GM12878 (cell line): ENCODE measurements at regions of chr17 and their contacts with region 1.

Region 1: DNA sequence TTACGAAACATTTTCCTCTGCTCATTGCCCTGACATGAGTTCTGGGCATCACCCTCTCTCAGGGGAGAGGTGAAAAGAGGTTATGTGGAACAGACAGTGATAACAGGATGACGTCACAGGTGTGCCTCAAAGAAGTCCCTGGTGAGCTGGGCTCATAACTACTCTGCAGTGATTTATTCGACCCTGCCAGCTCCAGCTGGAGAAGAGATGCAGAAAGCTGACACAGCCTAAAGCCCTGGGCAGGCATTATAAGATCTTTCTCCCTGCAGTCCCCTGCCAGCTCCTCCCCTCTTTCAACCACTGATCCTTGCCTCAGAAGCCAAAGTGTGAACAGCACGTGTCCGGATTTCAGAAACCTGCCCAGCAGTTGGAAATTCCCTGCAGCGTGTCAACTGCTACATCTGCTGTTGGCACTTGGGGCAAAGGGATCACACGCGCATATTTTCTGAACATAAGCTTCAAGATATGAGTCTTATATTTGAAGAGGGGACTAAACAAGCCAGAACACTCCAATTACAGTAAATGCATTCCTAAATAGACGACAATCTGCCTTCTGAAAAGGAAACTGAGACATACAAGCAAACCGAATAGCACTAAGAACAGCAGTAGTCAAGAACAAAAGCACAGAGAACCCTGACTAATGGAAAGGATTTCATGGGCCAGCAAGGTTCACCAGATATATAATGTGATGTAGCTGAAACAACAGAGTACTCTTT is 80.5 kb downstream of the SMG6 start:
- DNase-seq: peak; percentile 81
- ATAC-seq: peak; percentile 95
- H3K4me3 ChIP-seq: peak overlapping the region; percentile 29; the same call in 1 of the 2 replicates
- H3K27ac ChIP-seq: peak overlapping the region; percentile 87
- H3K4me1 ChIP-seq: peaks cover 30% of the 10 kb centered on the region
- H3K27me3 ChIP-seq: no peaks in the 10 kb centered on the region
- CTCF ChIP-seq: no peak
- EP300 ChIP-seq: peak; percentile 69 to 88
- POLR2A ChIP-seq: peak; percentile 13; the same call in 1 of the 2 replicates
- RAD21 ChIP-seq: 0 out of 2 replicates have a peak, but pooled peaks have one; percentile 8

Region 2: GRCh38 chr17:2087597-2088211 is 135.4 kb before region 1 on chr17:
- CTCF ChIA-PET with region 1: interaction called, 11 read pairs
- POLR2A ChIA-PET with region 1: interaction called, 12 read pairs
- RAD21 ChIA-PET with region 1: interaction called, 27 read pairs
- SMC1A ChIA-PET with region 1: interaction called, 44 read pairs
- in situ Hi-C with region 1: no loop called
- intact Hi-C with region 1: no loop called
- DNase-seq: peak; percentile 79
- ATAC-seq: peak; percentile 56
- H3K4me3 ChIP-seq: no peak overlapping the region
- H3K27ac ChIP-seq: peak overlapping the region; percentile 93
- H3K4me1 ChIP-seq: peaks cover 83% of the 10 kb centered on the region
- H3K27me3 ChIP-seq: no peaks in the 10 kb centered on the region
- CTCF ChIP-seq: no peak
- EP300 ChIP-seq: peak; percentile 99
- POLR2A ChIP-seq: no peak; the same call in 1 of the 2 replicates
- RAD21 ChIP-seq: no peak

Region 3: DNA sequence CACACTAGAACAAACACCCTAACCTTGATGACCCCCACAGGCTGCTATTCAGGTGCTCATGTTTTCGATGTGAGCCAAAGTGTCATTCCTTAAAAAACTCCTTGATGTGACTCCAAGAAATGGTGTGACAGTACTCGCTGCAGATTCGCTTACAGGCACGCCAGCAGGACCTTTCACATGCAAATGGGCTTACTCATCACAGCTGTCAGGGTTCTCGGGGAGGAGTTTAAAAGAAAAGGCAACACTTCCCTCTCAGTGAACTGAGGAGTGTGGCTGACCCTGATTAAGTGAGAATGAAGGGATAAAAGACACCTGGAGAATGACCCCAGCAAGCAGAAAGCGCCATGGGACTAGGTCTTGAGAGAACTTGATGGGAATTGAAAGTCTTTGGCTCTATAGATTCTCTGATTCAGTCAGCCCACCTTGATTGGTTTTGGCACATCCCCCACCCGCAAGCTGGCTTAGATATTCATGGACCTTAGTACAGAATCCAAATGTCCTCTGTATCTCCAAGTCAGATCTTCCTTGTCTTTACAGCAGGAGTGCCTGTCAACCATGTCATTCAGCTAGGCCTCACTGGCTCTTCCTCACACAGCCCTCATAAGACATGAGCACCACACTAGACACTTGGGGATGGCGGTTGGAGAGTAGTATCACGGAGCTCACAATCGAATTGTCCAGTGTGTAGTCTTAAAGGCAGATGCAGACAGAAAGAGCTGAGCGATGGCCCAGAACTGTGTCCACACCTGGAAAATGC is 85.5 kb before region 1 on chr17:
- CTCF ChIA-PET with region 1: interaction called, 4 read pairs
- POLR2A ChIA-PET with region 1: interaction called, 3 read pairs
- RAD21 ChIA-PET with region 1: interaction called, 15 read pairs
- SMC1A ChIA-PET with region 1: interaction called, 15 read pairs
- in situ Hi-C with region 1: no loop called
- intact Hi-C with region 1: no loop called
- DNase-seq: peak; percentile 51
- ATAC-seq: peak; percentile 86
- H3K4me3 ChIP-seq: no peak overlapping the region; the same call in 1 of the 2 replicates
- H3K27ac ChIP-seq: peak overlapping the region; percentile 87
- H3K4me1 ChIP-seq: peaks cover 41% of the 10 kb centered on the region
- H3K27me3 ChIP-seq: no peaks in the 10 kb centered on the region
- CTCF ChIP-seq: no peak
- EP300 ChIP-seq: no peak
- POLR2A ChIP-seq: peak; percentile 23; the same call in 1 of the 2 replicates
- RAD21 ChIP-seq: no peak

Region 4: DNA sequence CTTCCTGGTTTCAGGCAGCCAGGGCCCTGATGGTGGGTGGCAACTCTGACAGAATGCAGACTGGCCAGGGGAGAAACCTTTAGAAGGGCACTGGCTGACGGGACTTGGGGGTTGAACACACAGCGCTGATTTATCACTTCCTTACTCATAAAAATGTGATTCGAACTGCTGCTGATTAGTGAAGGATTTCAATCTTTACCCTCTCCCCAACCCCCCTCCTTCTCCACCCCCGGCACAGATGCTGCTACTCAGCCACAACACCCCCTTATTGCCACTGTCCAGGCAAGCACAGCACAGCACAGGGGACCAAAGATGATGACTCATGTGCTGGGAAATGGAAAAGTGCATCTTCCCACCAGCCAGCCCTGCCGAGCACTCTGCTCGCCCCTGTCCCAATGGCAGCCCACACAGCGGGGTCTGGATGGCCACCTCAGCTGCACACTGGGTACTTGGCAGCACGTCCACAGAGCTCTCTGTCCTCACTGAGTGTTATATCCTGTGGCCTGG is 10.4 kb after region 1 on chr17:
- CTCF ChIA-PET with region 1: interaction called, 37 read pairs
- POLR2A ChIA-PET with region 1: interaction called, 22 read pairs
- RAD21 ChIA-PET with region 1: interaction called, 50 read pairs
- SMC1A ChIA-PET with region 1: interaction called, 70 read pairs
- in situ Hi-C with region 1: no loop called
- intact Hi-C with region 1: no loop called
- DNase-seq: no peak
- ATAC-seq: no peak
- H3K4me3 ChIP-seq: no peak overlapping the region
- H3K27ac ChIP-seq: no peak overlapping the region
- H3K4me1 ChIP-seq: peaks cover 43% of the 10 kb centered on the region
- H3K27me3 ChIP-seq: no peaks in the 10 kb centered on the region
- CTCF ChIP-seq: no peak
- EP300 ChIP-seq: no peak
- POLR2A ChIP-seq: no peak
- RAD21 ChIP-seq: no peak

Region 5: GRCh38 chr17:2253768-2254406 is 30.8 kb after region 1 on chr17:
- CTCF ChIA-PET with region 1: interaction called, 15 read pairs
- POLR2A ChIA-PET with region 1: interaction called, 17 read pairs
- RAD21 ChIA-PET with region 1: interaction called, 22 read pairs
- SMC1A ChIA-PET with region 1: interaction called, 15 read pairs
- in situ Hi-C with region 1: no loop called
- intact Hi-C with region 1: no loop called
- DNase-seq: peak; percentile 90
- ATAC-seq: peak; percentile 97
- H3K4me3 ChIP-seq: peak overlapping the region; percentile 36; the same call in 1 of the 2 replicates
- H3K27ac ChIP-seq: peak overlapping the region; percentile 90
- H3K4me1 ChIP-seq: peaks cover 36% of the 10 kb centered on the region
- H3K27me3 ChIP-seq: no peaks in the 10 kb centered on the region
- CTCF ChIP-seq: no peak
- EP300 ChIP-seq: peak; percentile 91 to 95
- POLR2A ChIP-seq: peak; percentile 37; the same call in 1 of the 2 replicates
- RAD21 ChIP-seq: peak; percentile 12; the same call in 1 of the 2 replicates

Region 6: GRCh38 chr17:2266045-2266864 is 43.2 kb after region 1 on chr17:
- CTCF ChIA-PET with region 1: interaction called, 15 read pairs
- POLR2A ChIA-PET with region 1: interaction called, 9 read pairs
- RAD21 ChIA-PET with region 1: interaction called, 6 read pairs
- SMC1A ChIA-PET with region 1: interaction called, 32 read pairs
- in situ Hi-C with region 1: no loop called
- intact Hi-C with region 1: no loop called
- DNase-seq: peak; percentile 97
- ATAC-seq: peak; percentile 90
- H3K4me3 ChIP-seq: peak overlapping the region; percentile 28; the same call in 1 of the 2 replicates
- H3K27ac ChIP-seq: peak overlapping the region; percentile 99
- H3K4me1 ChIP-seq: peaks cover 61% of the 10 kb centered on the region
- H3K27me3 ChIP-seq: no peaks in the 10 kb centered on the region
- CTCF ChIP-seq: no peak
- EP300 ChIP-seq: peak; percentile 58 to 87; a peak in 3 of 4 replicates
- POLR2A ChIP-seq: peak; percentile 64
- RAD21 ChIP-seq: peak; percentile 16; the same call in 1 of the 2 replicates